ENCODE measurements at regions of chr21 and their contacts with region 1.

Region 1: DNA sequence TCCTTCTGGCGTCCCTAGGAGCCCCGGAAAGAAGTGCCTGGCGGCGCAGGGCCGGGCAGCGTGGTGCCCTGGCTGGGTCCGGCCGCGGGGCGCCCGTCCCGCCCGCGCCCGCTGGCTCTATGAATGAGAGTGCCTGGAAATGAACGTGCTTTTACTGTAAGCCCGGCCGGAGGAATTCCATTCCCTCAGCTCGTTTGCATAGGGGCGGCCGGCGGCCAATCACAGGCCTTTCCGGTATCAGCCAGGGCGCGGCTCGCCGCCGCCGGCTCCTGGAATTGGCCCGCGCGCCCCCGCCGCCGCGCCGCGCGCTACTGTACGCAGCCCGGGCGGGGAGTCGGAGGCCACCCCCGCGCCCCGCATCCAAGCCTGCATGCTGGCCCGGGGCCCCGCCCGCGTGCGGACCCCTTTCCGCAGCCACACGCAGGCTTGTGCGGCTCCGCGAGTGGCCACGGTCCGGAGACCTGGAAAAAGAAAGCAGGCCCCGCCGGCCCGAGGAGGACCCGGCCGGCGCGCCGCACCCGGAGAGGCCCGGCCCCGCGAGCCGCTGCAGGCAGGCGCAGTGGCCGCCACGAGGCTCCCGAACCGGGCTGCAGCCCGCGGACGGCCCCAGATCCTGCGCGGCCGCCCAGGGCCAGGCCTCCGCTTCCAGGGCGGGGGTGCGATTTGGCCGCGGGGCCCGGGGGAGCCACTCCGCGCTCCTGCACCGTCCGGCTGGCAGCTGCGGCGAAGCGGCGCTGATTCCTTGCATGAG is 160.4 kb downstream of the RUNX1 start:
- DNase-seq: peak; percentile 90 to 93
- ATAC-seq: peak; percentile 85 to 95 (median 89)
- H3K4me3 ChIP-seq: peak overlapping the region; percentile 53 to 76 (median 68)
- H3K27ac ChIP-seq: peak overlapping the region; percentile 77 to 99 (median 92)
- H3K4me1 ChIP-seq: peaks cover 0 to 49% (median 25%) of the 10 kb centered on the region in 9 donors
- H3K27me3 ChIP-seq: peaks cover 3 to 86% (median 78%) of the 10 kb centered on the region in 7 donors
- CTCF ChIP-seq: peak in 1 of 9 donors; percentile 2

Region 2: DNA sequence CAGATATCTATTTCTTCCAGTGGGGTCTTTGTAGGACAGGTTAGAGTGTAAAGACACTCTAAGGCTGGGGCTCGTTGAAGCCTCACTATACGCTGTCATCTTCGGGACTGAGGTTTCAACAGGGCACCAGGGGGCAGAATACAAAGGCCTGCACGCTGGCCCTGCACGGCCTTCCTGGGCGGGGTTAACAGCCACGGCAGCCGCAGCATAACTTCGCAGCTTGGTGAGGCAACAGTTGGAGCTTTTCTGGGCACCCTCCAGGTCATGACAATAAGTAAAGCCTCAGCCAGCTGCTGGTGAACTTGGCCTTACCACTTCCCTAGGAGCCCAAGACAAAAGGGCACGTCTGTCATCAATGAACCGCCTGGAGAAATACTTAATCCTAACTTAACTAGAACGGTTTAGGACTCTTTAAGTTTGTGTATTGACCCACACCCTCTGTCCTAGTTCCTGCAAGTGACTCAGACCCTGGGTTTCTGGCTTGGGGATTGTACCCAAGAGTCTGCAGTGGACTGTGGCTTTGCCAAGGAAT is 162.6 kb after region 1 on chr21:
- intact Hi-C with region 1: loop called in 1 of 10 experiments (anchors 5 kb)
- DNase-seq: peak; percentile 77 to 83
- ATAC-seq: peak; percentile 85 to 96 (median 90)
- H3K4me3 ChIP-seq: no peak overlapping the region
- H3K27ac ChIP-seq: peak overlapping the region in 5 of 10 donors; percentile 16 to 73 (median 49)
- H3K4me1 ChIP-seq: peaks cover 3 to 48% (median 10%) of the 10 kb centered on the region in 9 donors
- H3K27me3 ChIP-seq: peaks cover 0 to 21% (median 7%) of the 10 kb centered on the region in 7 donors
- CTCF ChIP-seq: peak; percentile 19 to 74 (median 68)

Region 3: GRCh38 chr21:35256467-35256988 is 367.8 kb after region 1 on chr21:
- intact Hi-C with region 1: loop called in 1 of 10 experiments (anchors 5 kb)
- DNase-seq: peak; percentile 75 to 83
- ATAC-seq: peak; percentile 81 to 100 (median 96)
- H3K4me3 ChIP-seq: peak overlapping the region in 3 of 10 donors; percentile 1 to 27 (median 17)
- H3K27ac ChIP-seq: peak overlapping the region in 8 of 10 donors; percentile 40 to 78 (median 62)
- H3K4me1 ChIP-seq: peaks cover 3 to 32% (median 18%) of the 10 kb centered on the region in 9 donors
- H3K27me3 ChIP-seq: no peaks in the 10 kb centered on the region
- CTCF ChIP-seq: peak in 2 of 9 donors; percentile 12 to 14

Region 4: GRCh38 chr21:35400233-35400957 is 511.7 kb after region 1 on chr21:
- intact Hi-C with region 1: loop called in 7 of 10 experiments (anchors 2 to 10 kb)
- DNase-seq: peak in 1 of 2 donors; percentile 11
- ATAC-seq: peak in 7 of 8 donors; percentile 23 to 78 (median 67)
- H3K4me3 ChIP-seq: peak overlapping the region in 1 of 10 donors; percentile 18
- H3K27ac ChIP-seq: peak overlapping the region in 1 of 10 donors; percentile 64
- H3K4me1 ChIP-seq: peaks cover 0 to 26% (median 0%) of the 10 kb centered on the region in 9 donors
- H3K27me3 ChIP-seq: peaks cover 0 to 32% (median 19%) of the 10 kb centered on the region in 7 donors
- CTCF ChIP-seq: peak in 8 of 9 donors; percentile 17 to 64 (median 53)

Region 5: DNA sequence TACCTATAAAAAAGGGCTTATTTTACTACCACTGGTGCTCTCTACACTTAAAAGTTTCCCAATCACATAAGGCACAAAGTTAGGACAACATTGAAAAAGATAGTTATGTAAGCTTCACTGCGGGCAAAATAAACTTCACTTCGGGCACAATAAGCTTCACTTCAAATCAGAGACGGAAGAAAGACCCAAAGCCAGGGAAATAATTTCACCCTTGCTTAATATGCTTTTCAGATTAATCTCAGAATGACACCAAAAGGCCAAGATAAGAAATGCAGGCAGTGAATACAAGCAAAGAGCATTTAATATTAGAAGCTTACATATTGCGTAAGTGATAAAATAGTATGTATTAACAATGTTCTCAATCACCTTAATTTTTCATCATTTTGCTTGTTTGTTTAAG is 727.3 kb after region 1 on chr21:
- intact Hi-C with region 1: loop called in 4 of 10 experiments (anchors 10 kb)
- DNase-seq: no peak
- ATAC-seq: no peak
- H3K4me3 ChIP-seq: no peak overlapping the region
- H3K27ac ChIP-seq: peak overlapping the region in 2 of 10 donors; percentile 40
- H3K4me1 ChIP-seq: peaks cover 0 to 15% (median 0%) of the 10 kb centered on the region in 9 donors
- H3K27me3 ChIP-seq: no peaks in the 10 kb centered on the region
- CTCF ChIP-seq: peak in 6 of 9 donors; percentile 35 to 55 (median 53)

Region 6: GRCh38 chr21:35932232-35932911 is 1043.6 kb after region 1 on chr21:
- intact Hi-C with region 1: loop called in 3 of 10 experiments (anchors 5 to 10 kb)
- DNase-seq: peak; percentile 27 to 83
- ATAC-seq: peak; percentile 73 to 97 (median 92)
- H3K4me3 ChIP-seq: peak overlapping the region in 1 of 10 donors; percentile 0
- H3K27ac ChIP-seq: peak overlapping the region in 9 of 10 donors; percentile 14 to 93 (median 86)
- H3K4me1 ChIP-seq: peaks cover 0 to 29% (median 22%) of the 10 kb centered on the region in 9 donors
- H3K27me3 ChIP-seq: no peaks in the 10 kb centered on the region
- CTCF ChIP-seq: no peak

Measured in heart right ventricle (tissue), 16 donors.